ENCODE measurements at regions of chr2 and their contacts with region 1.

Region 1: DNA sequence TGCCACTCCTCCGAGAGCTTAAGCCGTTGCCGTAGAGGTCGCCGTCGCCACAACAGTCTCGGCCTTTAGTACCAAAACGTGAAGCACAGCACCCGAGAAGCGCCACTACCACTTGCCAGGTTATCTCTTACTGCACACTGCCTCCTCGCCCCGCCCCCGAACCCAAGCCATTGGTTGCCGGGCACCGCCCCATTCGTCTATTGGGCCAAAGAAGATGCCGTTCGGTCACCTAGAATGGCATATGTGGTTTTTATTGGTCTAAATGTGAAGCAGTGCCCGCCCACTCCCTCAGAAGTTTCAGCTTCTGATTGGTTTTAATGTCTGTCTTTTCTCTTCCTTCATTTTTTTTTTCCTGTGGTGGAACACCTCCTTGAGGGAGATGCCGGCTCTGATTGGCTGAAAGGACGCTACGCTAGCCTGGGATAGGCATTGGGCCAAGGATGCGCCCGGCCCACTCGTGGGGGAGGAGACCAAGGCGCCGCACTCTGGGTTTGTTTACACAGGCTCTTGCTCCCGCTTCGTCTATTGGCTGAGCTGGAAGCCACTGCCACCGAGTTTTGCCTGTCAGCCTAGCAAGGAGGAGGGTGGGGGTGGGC is at the start of gene PAIP2B:
- DNase-seq: peak; percentile 99
- H3K4me3 Mint-ChIP-seq: peak within 1 kb of the TSS; percentile 95
- H3K27ac Mint-ChIP-seq: peak within 1 kb of the TSS; percentile 81
- H3K4me1 Mint-ChIP-seq: peaks cover 8% of the 10 kb centered on the region
- H3K27me3 Mint-ChIP-seq: peaks cover 24% of the 10 kb centered on the region
- total RNA-seq, gene PAIP2B: 0.63 and 0.64 TPM in 2 replicates

Region 2: DNA sequence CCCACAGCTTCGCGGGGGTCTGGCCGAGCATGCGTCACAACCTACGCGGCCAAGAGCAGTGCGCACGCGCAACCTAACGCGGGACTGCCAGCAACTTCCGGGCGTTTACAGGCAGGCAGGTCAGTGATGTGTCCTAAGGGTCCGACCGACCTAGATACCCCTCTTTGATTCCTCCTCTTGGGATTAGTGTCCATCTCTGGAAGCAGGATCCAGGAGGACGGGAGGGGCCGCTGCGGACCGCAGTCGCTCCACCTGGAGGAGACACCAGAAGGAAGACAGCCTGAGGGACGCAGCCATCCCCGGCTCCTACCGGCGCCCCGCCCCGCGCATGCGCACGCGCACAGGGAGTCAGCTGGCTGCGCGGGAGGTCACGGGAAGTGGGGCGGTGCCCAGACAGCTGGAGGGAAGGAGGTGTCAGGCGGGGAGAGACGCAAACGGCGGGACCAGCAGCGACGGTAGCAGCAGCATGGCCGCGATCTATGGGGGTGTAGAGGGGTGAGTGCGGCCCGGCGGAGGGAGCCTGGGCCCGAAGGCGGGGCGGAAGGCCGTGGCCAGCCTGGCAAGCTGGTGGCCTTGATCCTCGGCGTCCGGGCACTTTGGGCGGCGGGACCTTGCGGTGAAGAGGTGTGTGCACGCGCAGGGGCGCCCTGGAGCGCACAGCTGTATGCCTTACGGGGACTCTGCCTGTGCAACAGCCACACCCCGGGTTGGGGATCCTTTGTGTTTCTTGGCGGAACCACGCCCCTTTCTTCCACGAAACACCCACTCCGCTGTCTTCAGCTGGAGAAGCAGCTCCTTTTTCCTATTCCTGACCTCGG is 158.6 kb before region 1 on chr2 and contains the start of gene NAGK:
- intact Hi-C with region 1: loop called (anchors 1 kb)
- DNase-seq: peak; percentile 99
- H3K4me3 Mint-ChIP-seq: peak within 1 kb of the TSS; percentile 92
- H3K27ac Mint-ChIP-seq: peak within 1 kb of the TSS; percentile 96
- H3K4me1 Mint-ChIP-seq: peaks cover 51% of the 10 kb centered on the region
- H3K27me3 Mint-ChIP-seq: no peaks in the 10 kb centered on the region
- total RNA-seq, gene NAGK: 55.9 and 67.1 TPM in 2 replicates

Region 3: GRCh38 chr2:71130113-71130904 is 96.8 kb before region 1 on chr2 and contains the starts of genes MCEE and MPHOSPH10:
- intact Hi-C with region 1: loop called (anchors 1 kb)
- DNase-seq: peak; percentile 97
- H3K4me3 Mint-ChIP-seq: no peak within 1 kb of the TSS
- H3K27ac Mint-ChIP-seq: no peak within 1 kb of the TSS
- H3K4me1 Mint-ChIP-seq: peaks cover 8% of the 10 kb centered on the region
- H3K27me3 Mint-ChIP-seq: no peaks in the 10 kb centered on the region
- total RNA-seq, gene MCEE: 14.4 and 17.2 TPM in 2 replicates
- total RNA-seq, gene MPHOSPH10: 69.4 and 74.5 TPM in 2 replicates

Region 4: DNA sequence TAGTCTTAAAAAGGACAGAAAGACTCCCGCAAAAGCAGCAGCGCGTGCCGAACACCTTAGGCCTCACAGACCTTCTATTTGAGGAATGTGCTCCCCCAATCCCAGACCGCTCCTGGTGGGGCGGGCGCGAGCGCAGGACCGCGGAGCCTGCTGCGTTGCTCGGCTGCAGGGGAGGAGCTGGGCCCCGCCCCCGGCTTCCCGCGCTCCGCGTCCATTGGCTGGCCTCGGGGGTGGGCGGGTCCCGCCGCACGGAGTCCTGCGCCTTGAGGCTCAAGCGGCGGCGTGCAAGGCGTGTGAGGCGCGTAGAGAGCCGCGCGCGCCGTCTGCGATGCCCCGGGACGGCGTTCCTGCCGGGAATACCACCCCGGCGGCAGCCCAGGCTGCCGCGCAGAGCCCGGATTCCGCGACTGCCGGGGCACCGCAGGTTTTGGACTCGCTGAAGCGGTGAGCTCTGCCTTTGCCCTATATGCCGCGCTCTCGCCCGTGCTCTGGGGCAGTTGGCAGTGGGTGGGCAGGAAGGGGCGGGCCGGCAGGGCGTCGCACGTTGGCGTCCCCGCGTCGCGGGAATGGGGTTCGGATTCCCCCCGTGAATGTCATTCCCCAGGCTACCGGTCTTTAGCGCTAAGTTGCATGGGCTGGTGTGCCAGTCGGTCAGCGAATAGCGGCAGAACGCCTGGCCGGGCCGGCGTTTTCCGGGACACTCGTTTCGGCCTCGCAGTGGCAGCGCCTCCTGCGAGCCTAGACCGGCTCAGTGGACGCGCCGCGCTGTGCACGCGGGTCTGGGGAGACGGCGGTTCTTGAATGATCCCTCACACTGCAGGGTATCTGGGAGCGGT is 49.5 kb after region 1 on chr2:
- intact Hi-C with region 1: loop called (anchors 1 kb)
- DNase-seq: peak; percentile 96
- H3K4me3 Mint-ChIP-seq: peak overlapping the region; percentile 76
- H3K27ac Mint-ChIP-seq: no peak overlapping the region
- H3K4me1 Mint-ChIP-seq: peaks cover 14% of the 10 kb centered on the region
- H3K27me3 Mint-ChIP-seq: peaks cover 75% of the 10 kb centered on the region

Region 5: DNA sequence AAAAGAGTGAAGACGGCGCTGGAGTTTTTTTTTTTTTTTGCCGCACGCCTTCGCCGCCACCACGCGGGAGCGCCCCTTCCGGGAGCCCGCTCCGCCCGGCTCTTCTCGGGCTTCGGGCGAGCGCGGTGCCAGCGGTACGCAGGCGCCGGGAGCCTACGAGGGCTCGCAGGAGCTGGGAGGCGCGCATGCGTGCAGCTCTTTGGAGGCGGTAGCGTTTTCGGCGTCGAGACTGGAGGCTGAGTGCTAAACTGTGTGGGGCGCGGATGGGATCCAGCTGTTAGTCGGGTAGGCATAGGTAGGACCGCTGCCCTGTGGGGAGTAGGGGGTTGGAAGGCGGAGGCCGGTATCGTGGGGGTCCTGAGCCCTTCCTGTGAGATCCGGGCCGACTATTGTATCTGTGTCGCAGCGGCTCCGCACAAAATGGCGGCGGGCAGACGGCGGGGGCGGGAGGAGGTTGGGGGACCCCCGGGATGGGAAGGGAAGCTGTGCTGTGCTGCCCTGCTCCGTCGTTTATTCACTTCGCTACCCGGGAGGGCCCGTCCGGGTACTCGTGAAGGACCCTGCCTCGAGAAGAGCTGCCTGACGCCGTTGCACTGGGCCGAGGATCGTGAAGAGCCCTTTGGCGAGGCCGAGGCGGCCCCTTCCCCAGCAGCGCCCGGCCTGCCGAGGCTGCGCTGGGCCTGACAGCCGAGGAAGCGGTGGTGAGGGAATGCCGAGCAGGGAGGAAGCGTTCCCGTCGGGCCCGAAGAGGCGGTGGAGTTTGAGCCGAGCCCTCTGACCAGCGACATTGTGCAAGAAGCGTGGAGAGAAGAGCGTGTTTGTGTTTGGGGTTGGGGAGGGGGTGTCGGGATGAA is 104.7 kb after region 1 on chr2 and contains the start of gene ZNF638:
- intact Hi-C with region 1: loop called (anchors 1 kb)
- DNase-seq: peak; percentile 98
- H3K4me3 Mint-ChIP-seq: peak within 1 kb of the TSS; percentile 94
- H3K27ac Mint-ChIP-seq: peak within 1 kb of the TSS; percentile 100
- H3K4me1 Mint-ChIP-seq: peaks cover 20% of the 10 kb centered on the region
- H3K27me3 Mint-ChIP-seq: peaks cover 12% of the 10 kb centered on the region
- total RNA-seq, gene ZNF638: 90.2 and 91.5 TPM in 2 replicates